PC-3 (cell line): ENCODE measurements at regions of chr18 and their contacts with region 1.

Region 1: DNA sequence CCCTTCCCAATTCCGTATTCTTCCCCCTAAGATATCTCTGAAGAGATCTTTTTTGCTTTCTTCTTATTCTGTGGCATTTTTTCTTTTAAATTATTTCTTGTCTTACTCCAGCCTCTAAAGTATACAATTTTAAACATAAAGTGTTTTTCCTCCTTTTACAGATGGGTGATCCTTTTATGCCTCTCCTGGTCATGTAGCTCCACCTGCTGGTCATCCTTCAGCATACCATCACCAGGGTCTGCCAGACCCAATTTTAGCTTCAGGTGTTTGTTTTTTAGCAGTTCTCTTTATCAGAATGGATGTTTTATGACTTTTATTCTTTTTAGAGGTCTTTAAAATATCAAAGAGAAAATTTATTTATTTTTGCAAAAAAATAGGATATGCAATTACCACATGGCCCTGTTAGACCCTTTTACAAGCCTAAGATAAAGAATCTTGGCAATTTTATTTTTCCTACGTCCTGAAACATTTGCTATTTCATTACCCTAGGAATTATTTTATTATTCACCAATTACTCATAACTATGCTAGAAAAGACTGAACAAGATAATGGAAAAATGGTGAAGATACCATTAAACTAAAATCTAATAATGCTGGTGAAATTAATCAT is 55.5 kb downstream of the PIGN start:
- DNase-seq: peak; percentile 74
- ATAC-seq: peak; percentile 80
- H3K4me3 ChIP-seq: no peak overlapping the region
- H3K27ac ChIP-seq: no peak overlapping the region
- H3K4me1 ChIP-seq: peaks cover 9% of the 10 kb centered on the region; the same call in 1 of the 2 replicates
- H3K27me3 ChIP-seq: no peaks in the 10 kb centered on the region
- CTCF ChIP-seq: peak; percentile 95

Region 2: GRCh38 chr18:60684843-60685513 is 1446.4 kb before region 1 on chr18:
- CTCF ChIA-PET with region 1: no interaction called
- POLR2A ChIA-PET with region 1: no interaction called
- intact Hi-C with region 1: loop called (anchors 10 kb)
- DNase-seq: peak; percentile 42
- ATAC-seq: peak; percentile 61
- H3K4me3 ChIP-seq: no peak overlapping the region
- H3K27ac ChIP-seq: no peak overlapping the region
- H3K4me1 ChIP-seq: no peaks in the 10 kb centered on the region
- H3K27me3 ChIP-seq: peaks cover 29% of the 10 kb centered on the region
- CTCF ChIP-seq: peak; percentile 82

Region 3: DNA sequence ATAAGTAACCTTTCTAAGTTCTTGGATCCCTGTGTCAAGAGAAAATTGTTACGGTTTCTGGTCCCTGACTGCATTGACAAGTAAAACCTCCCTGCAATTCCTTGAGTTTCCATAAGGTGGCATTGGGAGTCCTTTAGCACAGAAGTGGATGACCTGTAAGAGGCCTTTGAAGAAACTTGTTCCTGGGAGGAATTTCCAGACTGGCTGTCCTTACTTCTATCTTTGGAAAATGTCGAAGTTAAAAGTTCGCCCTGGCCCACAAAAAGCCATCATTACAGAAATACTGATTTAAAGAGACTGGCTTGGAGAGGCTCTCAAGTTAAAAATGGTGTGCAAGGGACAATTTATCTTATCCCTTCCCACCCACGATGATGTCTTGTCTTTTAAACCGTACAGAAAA is 579.8 kb before region 1 on chr18:
- CTCF ChIA-PET with region 1: no interaction called
- POLR2A ChIA-PET with region 1: no interaction called
- intact Hi-C with region 1: loop called (anchors 1 kb)
- DNase-seq: peak; percentile 82
- ATAC-seq: peak; percentile 74
- H3K4me3 ChIP-seq: no peak overlapping the region
- H3K27ac ChIP-seq: no peak overlapping the region
- H3K4me1 ChIP-seq: no peaks in the 10 kb centered on the region
- H3K27me3 ChIP-seq: no peaks in the 10 kb centered on the region
- CTCF ChIP-seq: peak; percentile 79

Region 4: DNA sequence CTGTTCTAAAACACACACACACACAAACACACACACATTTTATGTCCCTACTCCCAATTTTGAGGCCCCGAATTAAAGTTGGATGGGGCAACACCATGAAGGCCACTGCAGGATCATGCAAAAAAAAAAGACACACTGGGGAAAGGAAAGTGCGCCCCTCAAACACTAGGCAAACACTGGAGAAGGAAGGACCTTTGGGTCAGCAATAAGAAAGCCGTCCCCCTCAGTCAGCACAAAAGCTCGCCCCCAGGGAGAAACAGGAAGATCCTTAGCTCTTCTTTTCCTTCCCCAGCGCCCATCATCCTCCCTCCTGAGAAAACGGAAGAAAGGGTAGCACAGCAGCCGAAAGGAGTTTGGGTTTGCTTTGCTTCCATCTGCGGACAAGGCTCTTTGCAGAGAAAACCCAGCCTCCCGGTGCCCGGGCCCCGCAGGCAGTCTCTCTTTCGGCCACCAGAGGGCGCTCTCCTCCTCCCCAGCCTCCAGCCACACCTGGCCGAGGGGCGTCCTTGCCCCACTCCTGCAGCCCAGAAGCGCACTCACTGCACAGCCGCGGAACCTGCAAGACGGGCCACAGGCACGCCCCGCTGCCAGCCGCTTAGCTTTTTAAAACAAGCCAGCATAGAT is 549.7 kb before region 1 on chr18:
- CTCF ChIA-PET with region 1: no interaction called
- POLR2A ChIA-PET with region 1: no interaction called
- intact Hi-C with region 1: loop called (anchors 1 kb)
- DNase-seq: peak; percentile 61
- ATAC-seq: peak; percentile 93
- H3K4me3 ChIP-seq: peak overlapping the region; percentile 58
- H3K27ac ChIP-seq: no peak overlapping the region
- H3K4me1 ChIP-seq: peaks cover 3% of the 10 kb centered on the region; the same call in 1 of the 2 replicates
- H3K27me3 ChIP-seq: peaks cover under 1% of the 10 kb centered on the region; the same call in 1 of the 2 replicates
- CTCF ChIP-seq: peak; percentile 92

Region 5: DNA sequence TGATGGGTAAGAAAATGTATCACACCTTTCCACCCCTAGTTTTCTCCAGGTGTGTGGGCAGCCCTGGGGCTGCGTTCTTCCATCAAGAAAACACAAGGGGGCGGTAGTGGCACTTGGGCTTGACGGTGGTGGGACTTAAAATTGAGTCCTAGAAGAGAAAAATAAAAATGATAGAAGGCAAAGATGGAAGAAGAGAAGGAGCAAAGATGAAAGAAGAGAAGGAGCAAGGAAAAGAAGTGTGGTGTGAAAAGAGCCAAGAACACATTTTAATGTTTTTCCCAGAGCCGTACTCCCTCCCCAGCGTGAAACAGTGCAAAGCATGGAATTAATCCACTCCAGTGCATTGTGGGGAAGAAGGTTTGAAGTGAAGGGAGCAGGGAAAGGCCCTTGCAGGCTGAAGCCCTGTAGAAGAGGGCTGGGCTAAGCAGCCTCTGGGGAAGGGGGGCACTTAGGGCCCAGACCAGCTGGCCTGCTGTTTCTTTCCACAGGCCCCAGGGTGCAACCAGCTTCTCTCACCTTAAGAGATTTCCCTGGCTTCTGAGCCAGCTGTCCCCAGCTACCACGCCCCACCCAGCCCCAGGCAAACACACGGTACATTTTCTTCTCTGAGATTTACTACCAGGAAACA is 495.4 kb before region 1 on chr18:
- CTCF ChIA-PET with region 1: no interaction called
- POLR2A ChIA-PET with region 1: no interaction called
- intact Hi-C with region 1: loop called (anchors 1 kb)
- DNase-seq: peak; percentile 61
- ATAC-seq: no peak; the same call in 1 of the 2 replicates
- H3K4me3 ChIP-seq: no peak overlapping the region
- H3K27ac ChIP-seq: no peak overlapping the region
- H3K4me1 ChIP-seq: no peaks in the 10 kb centered on the region
- H3K27me3 ChIP-seq: no peaks in the 10 kb centered on the region
- CTCF ChIP-seq: peak; percentile 87

Region 6: GRCh38 chr18:61901323-61901986 is 229.9 kb before region 1 on chr18:
- CTCF ChIA-PET with region 1: no interaction called
- POLR2A ChIA-PET with region 1: no interaction called
- intact Hi-C with region 1: loop called (anchors 2 kb)
- DNase-seq: peak; percentile 73
- ATAC-seq: peak; percentile 94
- H3K4me3 ChIP-seq: no peak overlapping the region
- H3K27ac ChIP-seq: no peak overlapping the region
- H3K4me1 ChIP-seq: peaks cover 6% of the 10 kb centered on the region; the same call in 1 of the 2 replicates
- H3K27me3 ChIP-seq: peaks cover 17% of the 10 kb centered on the region
- CTCF ChIP-seq: peak; percentile 89

Region 7: GRCh38 chr18:62054929-62055498 is 76.4 kb before region 1 on chr18:
- CTCF ChIA-PET with region 1: no interaction called
- POLR2A ChIA-PET with region 1: no interaction called
- intact Hi-C with region 1: no loop called
- DNase-seq: no peak
- ATAC-seq: no peak
- H3K4me3 ChIP-seq: no peak overlapping the region
- H3K27ac ChIP-seq: no peak overlapping the region
- H3K4me1 ChIP-seq: no peaks in the 10 kb centered on the region
- H3K27me3 ChIP-seq: no peaks in the 10 kb centered on the region
- CTCF ChIP-seq: no peak

Region 8: DNA sequence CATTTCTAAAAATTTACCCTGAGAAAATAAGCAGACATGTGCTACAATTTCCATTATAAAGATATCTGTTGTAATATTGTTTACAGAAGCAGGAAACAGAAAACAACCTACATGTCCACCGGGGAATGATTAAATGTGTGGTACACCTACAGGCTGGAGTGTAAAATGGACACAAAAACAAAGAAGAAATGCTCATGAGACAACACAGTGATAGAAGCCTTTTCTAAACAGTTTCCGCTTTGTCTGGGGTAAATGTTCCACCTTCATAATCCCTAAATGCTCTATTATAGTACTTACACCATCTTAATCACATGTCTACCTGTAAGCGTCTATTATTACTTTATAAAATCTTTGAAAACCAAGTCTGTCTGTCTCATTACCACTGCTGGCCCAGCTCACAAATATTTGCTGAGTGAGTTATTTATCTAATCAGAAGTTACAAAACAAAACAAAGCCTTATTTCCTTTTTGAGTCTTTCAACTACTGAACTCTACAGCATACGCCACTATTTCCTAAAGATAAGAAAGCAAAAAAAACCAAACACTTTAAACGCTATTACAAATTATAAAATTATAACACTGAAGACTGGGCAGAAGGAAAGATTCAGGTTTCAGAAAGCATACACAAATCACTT is 39.8 kb before region 1 on chr18:
- CTCF ChIA-PET with region 1: no interaction called
- POLR2A ChIA-PET with region 1: no interaction called
- intact Hi-C with region 1: no loop called
- DNase-seq: no peak
- ATAC-seq: no peak
- H3K4me3 ChIP-seq: no peak overlapping the region
- H3K27ac ChIP-seq: no peak overlapping the region
- H3K4me1 ChIP-seq: no peaks in the 10 kb centered on the region
- H3K27me3 ChIP-seq: no peaks in the 10 kb centered on the region
- CTCF ChIP-seq: no peak

Region 9: DNA sequence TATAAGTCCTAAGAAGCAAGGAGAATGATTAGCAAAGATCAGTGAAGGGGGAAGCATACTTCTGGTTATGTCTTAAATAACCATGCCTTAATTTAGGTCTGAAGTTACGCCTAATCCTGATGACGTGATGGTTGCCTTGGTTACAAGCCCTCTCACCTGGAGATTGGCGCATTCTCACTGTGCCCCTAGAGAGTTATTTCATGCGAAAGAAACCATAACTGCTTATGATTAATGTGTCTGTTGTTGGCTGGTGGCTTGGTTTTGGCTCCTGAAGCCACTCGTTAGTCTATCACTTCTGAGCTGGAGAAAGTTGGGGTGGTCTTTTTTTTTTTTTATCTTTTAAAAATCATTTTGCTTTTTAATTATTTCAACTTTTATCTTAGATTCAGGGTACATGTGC is 240.8 kb after region 1 on chr18:
- CTCF ChIA-PET with region 1: no interaction called
- POLR2A ChIA-PET with region 1: no interaction called
- intact Hi-C with region 1: no loop called
- DNase-seq: no peak
- ATAC-seq: no peak
- H3K4me3 ChIP-seq: no peak overlapping the region
- H3K27ac ChIP-seq: no peak overlapping the region
- H3K4me1 ChIP-seq: 0 out of 2 replicates have a peak, but pooled peaks cover 4% of the 10 kb centered on the region
- H3K27me3 ChIP-seq: no peaks in the 10 kb centered on the region
- CTCF ChIP-seq: no peak